Heart left ventricle (tissue), 16 donors: ENCODE measurements at regions of chr12 and their contacts with region 1.

Region 1: GRCh38 chr12:96399919-96400797 is at the start of gene CDK17:
- DNase-seq: peak; percentile 83 to 92 (median 86)
- ATAC-seq: peak; percentile 65 to 93 (median 86)
- H3K4me3 ChIP-seq: peak within 1 kb of the TSS; percentile 59 to 98 (median 88)
- H3K27ac ChIP-seq: peak within 1 kb of the TSS; percentile 97 to 100 (median 99)
- H3K4me1 ChIP-seq: peaks cover 5 to 43% (median 25%) of the 10 kb centered on the region in 12 donors
- H3K27me3 ChIP-seq: no peaks in the 10 kb centered on the region
- CTCF ChIP-seq: peak; percentile 15 to 78 (median 56)
- POLR2A ChIP-seq: peak in 1 of 2 donors; percentile 64
- total RNA-seq, gene CDK17: 14.3 to 31.7 (median 23.1) TPM

Region 2: GRCh38 chr12:96061864-96062453 is 338.2 kb before region 1 on chr12:
- intact Hi-C with region 1: loop called (anchors 2 to 10 kb)
- DNase-seq: peak; percentile 61 to 74 (median 71)
- ATAC-seq: peak; percentile 55 to 92 (median 86)
- H3K4me3 ChIP-seq: no peak overlapping the region
- H3K27ac ChIP-seq: peak overlapping the region in 2 of 12 donors; percentile 7 to 39
- H3K4me1 ChIP-seq: peaks cover 0 to 27% (median 3%) of the 10 kb centered on the region in 12 donors
- H3K27me3 ChIP-seq: no peaks in the 10 kb centered on the region
- CTCF ChIP-seq: peak; percentile 73 to 93 (median 82)
- POLR2A ChIP-seq: no peak

Region 3: DNA sequence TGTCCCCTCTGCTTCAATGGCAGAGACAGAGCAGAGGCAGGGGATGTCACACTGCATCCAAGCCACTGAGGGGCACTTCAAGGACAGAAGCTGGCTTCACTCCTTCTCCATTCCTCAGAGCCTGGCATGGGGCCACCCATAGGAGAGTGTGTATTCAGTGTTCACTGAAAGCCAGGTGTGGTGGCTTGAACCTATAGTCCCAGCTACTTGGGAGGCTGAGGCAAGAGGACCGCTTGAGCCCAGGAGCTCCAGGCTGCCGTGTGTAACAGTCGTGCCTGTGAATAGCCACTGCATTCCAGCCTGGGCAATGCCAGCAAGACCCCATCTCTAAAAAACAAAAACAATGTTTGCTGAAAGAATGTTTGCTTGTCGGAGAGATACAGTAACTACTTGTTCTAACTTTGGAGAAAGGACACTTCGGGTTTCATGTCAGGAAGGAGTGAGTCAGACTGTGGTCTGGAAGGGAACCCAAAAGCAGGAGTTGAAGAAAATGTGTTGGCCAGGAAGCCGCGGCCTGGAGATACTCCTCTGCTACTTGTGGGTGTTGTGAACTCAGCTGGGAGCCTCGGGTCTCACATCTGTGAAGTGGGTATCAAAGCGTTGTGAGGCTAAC is 162.6 kb before region 1 on chr12:
- intact Hi-C with region 1: loop called in 5 of 10 experiments (anchors 5 to 10 kb)
- DNase-seq: peak in 4 of 5 donors; percentile 58 to 82 (median 65)
- ATAC-seq: peak in 3 of 4 donors; percentile 6 to 21 (median 20)
- H3K4me3 ChIP-seq: peak overlapping the region in 1 of 12 donors; percentile 6
- H3K27ac ChIP-seq: peak overlapping the region; percentile 33 to 90 (median 78)
- H3K4me1 ChIP-seq: peaks cover 21 to 100% (median 96%) of the 10 kb centered on the region in 12 donors
- H3K27me3 ChIP-seq: no peaks in the 10 kb centered on the region
- CTCF ChIP-seq: no peak
- POLR2A ChIP-seq: no peak

Region 4: GRCh38 chr12:96308881-96309280 is 91.3 kb before region 1 on chr12:
- intact Hi-C with region 1: loop called in 7 of 10 experiments (anchors 2 to 10 kb)
- DNase-seq: no peak
- ATAC-seq: no peak
- H3K4me3 ChIP-seq: no peak overlapping the region
- H3K27ac ChIP-seq: peak overlapping the region in 1 of 12 donors; percentile 34
- H3K4me1 ChIP-seq: peaks cover 0 to 8% (median 0%) of the 10 kb centered on the region in 12 donors
- H3K27me3 ChIP-seq: no peaks in the 10 kb centered on the region
- CTCF ChIP-seq: no peak
- POLR2A ChIP-seq: no peak

Region 5: GRCh38 chr12:96361074-96361473 is 39.1 kb before region 1 on chr12:
- intact Hi-C with region 1: loop called in 1 of 10 experiments (anchors 5 kb)
- DNase-seq: no peak
- ATAC-seq: peak in 1 of 4 donors; percentile 48
- H3K4me3 ChIP-seq: no peak overlapping the region
- H3K27ac ChIP-seq: peak overlapping the region in 2 of 12 donors; percentile 13 to 25
- H3K4me1 ChIP-seq: peaks cover 0 to 64% (median 48%) of the 10 kb centered on the region in 12 donors
- H3K27me3 ChIP-seq: no peaks in the 10 kb centered on the region
- CTCF ChIP-seq: no peak
- POLR2A ChIP-seq: no peak

Region 6: GRCh38 chr12:96501139-96501761 is 101.1 kb after region 1 on chr12:
- intact Hi-C with region 1: loop called in 6 of 10 experiments (anchors 5 to 10 kb)
- DNase-seq: peak; percentile 27 to 70 (median 38)
- ATAC-seq: peak in 3 of 4 donors; percentile 89 to 94 (median 91)
- H3K4me3 ChIP-seq: no peak overlapping the region
- H3K27ac ChIP-seq: peak overlapping the region; percentile 37 to 91 (median 76)
- H3K4me1 ChIP-seq: peaks cover 0 to 33% (median 13%) of the 10 kb centered on the region in 12 donors
- H3K27me3 ChIP-seq: no peaks in the 10 kb centered on the region
- CTCF ChIP-seq: no peak
- POLR2A ChIP-seq: no peak